CD4-positive, alpha-beta T cell (primary cell): ENCODE measurements at regions of chr14 and their contacts with region 1.

Region 1: GRCh38 chr14:21476925-21477681 is at the starts of genes RAB2B and TOX4:
- DNase-seq: peak; percentile 90 to 99 (median 92)
- ATAC-seq: peak; percentile 96
- H3K4me3 ChIP-seq: peak within 1 kb of the TSS; percentile 99
- H3K4me3 Mint-ChIP-seq: peak within 1 kb of the TSS; percentile 99
- H3K27ac ChIP-seq: peak within 1 kb of the TSS; percentile 73 to 94
- H3K27ac Mint-ChIP-seq: peak within 1 kb of the TSS; percentile 94
- H3K4me1 ChIP-seq: peaks cover 20% of the 10 kb centered on the region
- H3K4me1 Mint-ChIP-seq: peaks cover 48% of the 10 kb centered on the region
- H3K27me3 ChIP-seq: no peaks in the 10 kb centered on the region
- H3K27me3 Mint-ChIP-seq: no peaks in the 10 kb centered on the region
- CTCF ChIP-seq: peak; percentile 95
- total RNA-seq, gene RAB2B: 21.1 to 23.9 TPM
- total RNA-seq, gene TOX4: 70.9 to 77.4 TPM

Region 2: DNA sequence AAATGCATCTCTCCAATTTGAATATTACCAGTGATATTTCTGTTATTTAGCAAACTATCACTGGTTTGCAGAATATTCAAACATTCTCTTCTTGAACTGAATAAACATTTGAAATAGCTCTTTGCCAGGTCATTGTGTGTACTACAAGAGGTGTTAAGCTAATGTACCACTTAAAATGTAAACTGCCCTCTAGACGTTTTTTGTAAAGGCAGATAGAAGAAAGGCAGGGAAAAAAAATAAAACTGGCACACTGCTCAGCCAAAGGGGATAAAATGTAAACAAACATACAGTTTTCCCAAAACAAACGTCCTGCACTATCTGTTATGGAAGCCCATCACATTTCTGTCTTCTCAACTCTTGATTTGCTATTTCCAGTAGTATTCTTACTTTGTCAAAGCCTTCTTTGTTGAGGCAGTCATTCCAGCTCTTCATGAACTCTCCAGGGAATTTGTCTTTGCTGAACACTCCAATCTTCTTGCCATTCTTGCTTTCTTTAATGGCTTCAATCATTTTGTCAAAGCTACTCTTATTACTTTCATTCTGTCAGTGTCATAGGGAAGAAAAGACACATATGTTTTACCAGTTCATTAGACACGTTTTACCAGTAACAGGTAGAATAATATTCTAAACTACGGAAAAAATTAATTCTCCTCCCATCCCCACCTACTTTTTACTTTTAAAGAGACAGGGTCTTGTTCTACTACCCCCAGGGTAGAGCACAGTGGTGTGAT is 107.0 kb before region 1 on chr14:
- CTCF ChIA-PET with region 1: no interaction called
- POLR2A ChIA-PET with region 1: no interaction called
- intact Hi-C with region 1: no loop called
- DNase-seq: no peak
- ATAC-seq: no peak
- H3K4me3 ChIP-seq: no peak overlapping the region
- H3K4me3 Mint-ChIP-seq: no peak overlapping the region
- H3K27ac ChIP-seq: no peak overlapping the region
- H3K27ac Mint-ChIP-seq: no peak overlapping the region
- H3K4me1 ChIP-seq: peaks cover 4% of the 10 kb centered on the region
- H3K4me1 Mint-ChIP-seq: peaks cover 4% of the 10 kb centered on the region
- H3K27me3 ChIP-seq: no peaks in the 10 kb centered on the region
- H3K27me3 Mint-ChIP-seq: no peaks in the 10 kb centered on the region
- CTCF ChIP-seq: no peak

Region 3: DNA sequence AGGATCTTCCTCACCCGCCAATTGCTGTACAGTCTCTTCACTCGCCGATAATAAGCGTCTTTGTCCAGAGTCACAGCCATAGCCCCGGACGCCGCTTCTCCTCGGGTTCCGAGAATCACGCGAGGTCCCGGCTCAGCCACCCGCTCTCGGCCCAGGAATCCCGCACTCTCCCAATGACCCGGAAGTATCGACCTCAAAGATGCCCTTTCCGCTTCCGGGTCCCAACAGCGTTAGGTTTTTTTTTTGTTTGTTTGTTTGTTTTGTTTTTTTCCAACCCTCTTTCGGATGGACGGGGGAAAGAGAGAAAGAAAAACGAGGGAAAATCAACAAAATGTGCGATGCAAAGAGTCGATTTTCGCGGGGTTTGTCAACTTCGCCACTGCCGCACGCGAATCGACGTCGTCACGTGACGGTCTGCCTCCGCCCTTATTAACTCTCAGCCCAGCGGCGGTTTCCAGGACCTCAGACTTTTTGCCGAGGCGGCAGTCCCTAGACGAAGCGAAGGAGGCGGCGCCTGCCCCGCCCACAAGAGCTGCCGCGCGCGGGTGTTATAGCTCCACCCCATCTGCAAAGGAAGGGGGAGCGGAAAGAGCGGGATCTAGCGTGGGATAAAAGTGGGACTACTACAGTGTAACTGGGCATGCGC is 93.1 kb before region 1 on chr14 and contains the start of gene SUPT16H:
- CTCF ChIA-PET with region 1: interaction called, 7 read pairs
- POLR2A ChIA-PET with region 1: interaction called, 4 read pairs
- intact Hi-C with region 1: loop called (anchors 1 kb)
- DNase-seq: peak; percentile 84 to 97 (median 91)
- ATAC-seq: peak; percentile 91
- H3K4me3 ChIP-seq: peak within 1 kb of the TSS; percentile 82
- H3K4me3 Mint-ChIP-seq: peak within 1 kb of the TSS; percentile 98
- H3K27ac ChIP-seq: peak within 1 kb of the TSS; percentile 83 to 92
- H3K27ac Mint-ChIP-seq: peak within 1 kb of the TSS; percentile 99
- H3K4me1 ChIP-seq: peaks cover 18% of the 10 kb centered on the region
- H3K4me1 Mint-ChIP-seq: peaks cover 47% of the 10 kb centered on the region
- H3K27me3 ChIP-seq: no peaks in the 10 kb centered on the region
- H3K27me3 Mint-ChIP-seq: no peaks in the 10 kb centered on the region
- CTCF ChIP-seq: no peak
- total RNA-seq, gene SUPT16H: 47.8 to 50.8 TPM

Region 4: DNA sequence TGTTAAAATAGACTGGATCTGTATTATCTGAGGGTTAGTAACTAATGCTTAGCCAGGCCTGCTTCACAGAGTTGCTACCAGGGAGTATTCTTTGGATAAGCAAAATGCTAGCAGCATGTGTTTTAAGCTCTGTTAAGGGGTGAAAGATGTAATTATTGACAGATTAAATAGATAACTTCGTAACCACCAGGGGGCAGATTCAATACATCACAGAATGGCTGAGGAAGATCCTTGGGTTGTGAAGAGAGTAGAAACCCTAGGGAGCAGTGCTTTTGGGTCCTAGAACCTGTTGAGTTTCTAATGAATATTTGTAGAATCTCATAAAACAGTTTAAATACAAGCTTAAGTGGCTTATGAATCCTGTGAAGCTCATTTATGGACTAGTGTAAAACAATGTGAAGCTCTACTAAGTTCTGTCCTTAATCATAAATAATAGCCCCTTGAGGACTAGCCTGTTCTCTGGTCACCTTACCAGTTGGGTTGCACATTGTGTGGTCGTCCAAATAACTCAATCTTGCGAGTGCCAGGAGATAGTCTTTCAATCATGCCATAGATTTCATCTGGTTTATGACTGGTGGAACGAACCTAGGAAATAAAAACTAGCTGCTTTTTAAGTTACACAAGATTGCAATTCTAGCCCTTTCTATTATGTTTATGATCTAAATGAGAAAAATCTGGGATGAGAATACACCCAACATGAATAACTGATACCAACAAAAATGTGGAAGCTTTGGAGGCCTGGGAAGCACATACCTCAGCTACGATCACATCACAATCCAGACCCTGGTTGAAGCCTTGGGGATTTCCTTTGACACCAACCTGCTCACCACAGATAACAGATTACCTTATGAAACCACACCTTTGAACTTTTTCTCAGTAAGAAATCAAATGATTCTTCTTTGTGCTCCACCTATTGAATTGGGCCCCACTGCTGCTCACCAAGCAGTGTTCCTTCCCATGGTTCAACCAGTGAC is 21.7 kb after region 1 on chr14:
- CTCF ChIA-PET with region 1: interaction called, 26 read pairs
- POLR2A ChIA-PET with region 1: interaction called, 12 read pairs
- intact Hi-C with region 1: no loop called
- DNase-seq: peak in 5 of 14 experiments; percentile 14 to 81 (median 65)
- ATAC-seq: peak; percentile 77
- H3K4me3 ChIP-seq: no peak overlapping the region
- H3K4me3 Mint-ChIP-seq: no peak overlapping the region
- H3K27ac ChIP-seq: peak overlapping the region in 1 of 2 donors; percentile 4
- H3K27ac Mint-ChIP-seq: peak overlapping the region; percentile 73
- H3K4me1 ChIP-seq: peaks cover 7% of the 10 kb centered on the region
- H3K4me1 Mint-ChIP-seq: peaks cover 30% of the 10 kb centered on the region
- H3K27me3 ChIP-seq: no peaks in the 10 kb centered on the region
- H3K27me3 Mint-ChIP-seq: no peaks in the 10 kb centered on the region
- CTCF ChIP-seq: peak; percentile 69

Region 5: GRCh38 chr14:21525962-21526671 is 49.0 kb after region 1 on chr14 and contains the start of gene SALL2:
- CTCF ChIA-PET with region 1: interaction called, 5 read pairs
- POLR2A ChIA-PET with region 1: interaction called, 11 read pairs
- intact Hi-C with region 1: no loop called
- DNase-seq: peak; percentile 18 to 85 (median 61)
- ATAC-seq: peak; percentile 88
- H3K4me3 ChIP-seq: peak within 1 kb of the TSS; percentile 74
- H3K4me3 Mint-ChIP-seq: peak within 1 kb of the TSS; percentile 96
- H3K27ac ChIP-seq: peak within 1 kb of the TSS in 1 of 2 donors; percentile 7
- H3K27ac Mint-ChIP-seq: peak within 1 kb of the TSS; percentile 55
- H3K4me1 ChIP-seq: peaks cover 13% of the 10 kb centered on the region
- H3K4me1 Mint-ChIP-seq: peaks cover 22% of the 10 kb centered on the region
- H3K27me3 ChIP-seq: no peaks in the 10 kb centered on the region
- H3K27me3 Mint-ChIP-seq: no peaks in the 10 kb centered on the region
- CTCF ChIP-seq: no peak
- total RNA-seq, gene SALL2: 2.8 to 2.9 TPM